Activated T-helper 2 cell treated with anti-CD3 and anti-CD28 coated beads, Interferon-gamma antibody, Interleukin-2, Interleukin-4, amounts not matched to agents 10 μg/mL and 5 μg/mL and 100 μg/mL, durations not matched to agents 14 hours and 24 hours and 36 hours (primary cell): ENCODE measurements at regions of chr20 and their contacts with region 1.

Region 1: DNA sequence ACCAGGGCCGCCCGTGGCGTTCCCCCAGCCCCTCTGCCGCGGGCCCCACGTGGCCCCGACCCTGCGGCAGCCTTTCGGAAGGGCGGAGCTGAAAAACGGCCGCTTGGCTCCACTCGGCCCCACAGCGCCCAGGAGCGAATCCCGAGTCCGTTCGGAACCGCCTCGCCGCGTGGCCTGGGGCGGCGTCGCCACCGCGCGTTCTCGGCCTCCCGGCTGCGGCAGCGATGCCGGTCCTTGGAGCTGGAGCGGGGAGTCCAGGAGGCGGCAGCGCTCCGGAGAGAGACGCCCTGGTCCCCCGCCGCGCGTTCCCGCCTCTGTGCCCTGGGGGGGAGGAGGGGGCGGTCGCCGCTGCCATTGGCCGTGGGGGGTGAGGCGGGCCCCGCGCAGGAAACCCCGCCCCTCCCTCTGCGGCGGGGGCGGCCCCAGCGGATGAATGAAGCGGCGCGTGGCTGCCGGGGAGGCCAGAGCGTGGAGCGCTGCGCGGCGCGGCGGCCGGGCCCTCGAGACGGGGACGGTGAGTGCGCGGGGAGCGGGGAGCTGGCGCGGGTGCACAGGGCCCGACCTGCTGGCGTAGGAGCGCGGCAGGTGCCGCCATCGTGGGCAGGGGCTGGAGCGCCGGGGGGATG is at the start of gene SLCO4A1:
- DNase-seq: peak; percentile 89
- H3K4me3 Mint-ChIP-seq: peak within 1 kb of the TSS; percentile 80
- H3K27ac Mint-ChIP-seq: peak within 1 kb of the TSS; percentile 74
- H3K4me1 Mint-ChIP-seq: peaks cover 23% of the 10 kb centered on the region
- H3K27me3 Mint-ChIP-seq: peaks cover 7% of the 10 kb centered on the region
- total RNA-seq, gene SLCO4A1: 59.2 and 61.1 TPM in 2 replicates

Region 2: DNA sequence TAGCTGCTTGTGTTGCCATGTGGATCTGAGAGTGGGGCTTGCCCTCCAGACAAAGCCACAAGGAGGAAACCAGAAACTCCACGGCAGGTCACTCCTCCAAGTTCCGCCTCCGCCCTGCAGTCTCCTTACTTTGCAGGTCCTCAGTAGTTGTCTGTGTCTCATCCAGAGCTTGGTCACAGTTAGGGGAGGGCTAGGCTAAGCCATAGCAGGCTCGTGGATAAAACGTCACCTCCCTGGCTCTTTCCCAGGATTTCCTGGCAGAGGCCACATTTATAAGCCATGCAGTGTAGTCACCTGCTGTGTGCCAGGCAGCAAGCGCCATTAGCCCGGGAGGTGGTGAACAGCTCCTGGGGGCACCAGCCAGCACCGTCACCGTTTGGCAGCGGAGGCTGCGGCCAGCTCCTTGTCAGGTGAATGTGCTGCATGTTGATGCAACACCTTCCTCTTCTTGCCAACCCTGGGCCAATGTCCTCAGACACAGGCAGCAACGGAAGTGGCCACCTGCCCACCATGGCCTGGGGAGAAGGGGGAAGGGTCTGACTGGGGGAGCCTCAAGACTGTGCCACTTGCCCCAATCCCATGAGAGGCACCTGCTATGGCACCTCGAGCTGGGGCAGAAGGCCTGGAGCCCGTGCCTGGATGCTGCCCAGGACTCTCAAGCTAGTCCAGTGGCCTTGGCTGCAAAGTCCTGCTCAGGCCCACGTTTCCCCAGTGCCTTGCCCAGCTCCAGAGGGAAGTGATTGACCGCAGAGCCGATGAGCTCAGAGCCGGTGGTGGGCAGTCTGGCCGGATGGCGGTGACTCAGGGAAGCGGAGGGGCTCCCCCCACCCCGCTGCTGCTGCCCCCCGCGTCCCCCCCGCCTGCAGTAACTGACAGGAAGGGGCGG is 38.9 kb before region 1 on chr20:
- intact Hi-C with region 1: loop called (anchors 5 kb)
- DNase-seq: peak; percentile 34
- H3K4me3 Mint-ChIP-seq: peak overlapping the region; percentile 66
- H3K27ac Mint-ChIP-seq: peak overlapping the region; percentile 56
- H3K4me1 Mint-ChIP-seq: peaks cover 37% of the 10 kb centered on the region
- H3K27me3 Mint-ChIP-seq: peaks cover 8% of the 10 kb centered on the region

Region 3: GRCh38 chr20:62623488-62624324 is 18.4 kb before region 1 on chr20:
- intact Hi-C with region 1: loop called (anchors 1 kb)
- DNase-seq: peak; percentile 82
- H3K4me3 Mint-ChIP-seq: peak overlapping the region; percentile 70
- H3K27ac Mint-ChIP-seq: peak overlapping the region; percentile 99
- H3K4me1 Mint-ChIP-seq: peaks cover 24% of the 10 kb centered on the region
- H3K27me3 Mint-ChIP-seq: no peaks in the 10 kb centered on the region

Region 4: DNA sequence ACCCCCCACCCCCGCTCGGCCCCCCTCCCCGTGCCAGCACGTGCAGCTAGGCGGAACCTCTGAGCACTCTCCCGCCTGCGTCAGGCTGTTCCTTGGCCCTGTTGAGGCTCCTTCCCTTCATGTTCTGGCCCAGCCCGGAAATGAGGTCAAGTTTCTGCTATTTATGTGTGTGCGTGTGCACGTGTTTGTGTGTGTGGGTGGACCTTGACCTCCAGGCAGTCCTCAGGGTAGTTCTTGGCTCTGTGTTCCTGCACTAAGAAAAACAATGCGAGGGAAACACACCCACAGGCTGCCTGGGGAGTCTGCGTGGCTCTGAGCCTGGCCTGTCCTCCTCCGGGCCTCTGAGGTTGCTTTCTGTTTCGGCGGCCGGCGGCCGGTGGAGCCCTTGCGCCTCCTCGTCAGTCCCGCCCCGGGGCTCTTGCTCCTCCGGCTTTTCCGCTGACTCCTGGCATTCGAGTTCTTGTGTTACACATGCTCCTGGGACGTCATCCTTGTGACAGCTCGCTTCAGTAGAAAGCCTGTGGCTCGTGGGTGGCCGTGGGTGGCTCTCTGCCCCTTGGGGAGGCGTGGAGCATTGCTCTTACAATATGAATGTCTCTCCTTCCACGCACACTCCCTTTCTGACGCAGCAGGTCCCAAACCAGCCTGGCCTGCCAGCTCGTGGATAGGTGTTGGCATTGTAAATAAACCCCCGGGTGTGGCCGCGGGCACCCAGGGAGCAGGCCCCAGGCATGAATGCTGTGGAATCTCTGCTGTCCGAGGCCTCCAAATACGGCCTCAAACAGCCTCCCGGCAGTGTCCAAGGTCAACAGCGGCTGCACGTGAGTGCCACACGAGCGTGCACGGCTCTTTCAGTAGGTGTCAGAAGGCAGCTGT is 10.1 kb after region 1 on chr20:
- intact Hi-C with region 1: loop called (anchors 1 kb)
- DNase-seq: peak; percentile 66
- H3K4me3 Mint-ChIP-seq: peak overlapping the region; percentile 72
- H3K27ac Mint-ChIP-seq: peak overlapping the region; percentile 90
- H3K4me1 Mint-ChIP-seq: peaks cover 40% of the 10 kb centered on the region
- H3K27me3 Mint-ChIP-seq: no peaks in the 10 kb centered on the region

Region 5: DNA sequence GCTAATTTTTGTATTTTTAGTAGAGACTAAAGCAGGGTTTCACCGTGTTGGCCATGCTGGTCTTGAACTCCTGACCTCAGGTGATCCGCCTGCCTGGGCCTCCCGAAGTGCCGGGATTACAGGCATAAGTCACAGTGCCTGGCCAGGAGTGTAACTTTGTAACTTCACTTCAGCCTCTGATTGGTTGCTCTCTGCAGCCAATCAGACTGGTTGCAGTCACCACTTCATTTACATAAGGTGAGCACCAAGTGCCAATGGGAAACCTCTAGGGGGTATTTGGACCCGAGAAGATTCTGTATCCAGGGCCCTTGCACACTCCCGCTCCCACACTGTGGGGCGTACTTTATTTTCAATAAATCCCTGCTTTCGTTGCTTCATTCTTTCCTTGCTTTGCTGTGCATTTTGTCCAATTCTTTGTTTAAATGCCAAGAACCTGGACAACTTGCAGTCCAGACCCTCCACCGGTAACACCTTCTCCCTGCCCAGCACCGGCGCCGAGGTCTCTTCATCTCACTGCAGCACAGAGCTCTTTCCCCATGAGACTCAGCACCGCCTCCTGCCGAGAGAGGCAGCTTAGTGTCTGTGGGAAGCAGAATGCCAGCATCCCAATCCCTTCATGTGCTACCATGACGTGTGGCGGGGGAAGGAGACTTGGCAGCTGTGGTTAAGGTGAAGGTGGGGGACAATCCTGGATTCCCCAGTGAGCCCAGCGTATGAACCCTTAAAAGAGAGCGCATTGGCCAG is 140.2 kb after region 1 on chr20:
- intact Hi-C with region 1: no loop called
- DNase-seq: no peak
- H3K4me3 Mint-ChIP-seq: no peak overlapping the region
- H3K27ac Mint-ChIP-seq: no peak overlapping the region
- H3K4me1 Mint-ChIP-seq: peaks cover 3% of the 10 kb centered on the region
- H3K27me3 Mint-ChIP-seq: no peaks in the 10 kb centered on the region